T-cell (primary cell): ENCODE measurements at regions of chr6 and their contacts with region 1.

Region 1: GRCh38 chr6:10580570-10580969 is 59.4 kb downstream of the GCNT2 start:
- DNase-seq: no peak
- ATAC-seq: no peak
- H3K4me3 ChIP-seq: no peak overlapping the region
- H3K4me3 Mint-ChIP-seq: no peak overlapping the region
- H3K27ac ChIP-seq: no peak overlapping the region
- H3K27ac Mint-ChIP-seq: no peak overlapping the region
- H3K4me1 ChIP-seq: no peaks in the 10 kb centered on the region
- H3K4me1 Mint-ChIP-seq: peaks cover 0 to 13% (median 3%) of the 10 kb centered on the region in 3 donors
- H3K27me3 ChIP-seq: no peaks in the 10 kb centered on the region
- H3K27me3 Mint-ChIP-seq: no peaks in the 10 kb centered on the region

Region 2: DNA sequence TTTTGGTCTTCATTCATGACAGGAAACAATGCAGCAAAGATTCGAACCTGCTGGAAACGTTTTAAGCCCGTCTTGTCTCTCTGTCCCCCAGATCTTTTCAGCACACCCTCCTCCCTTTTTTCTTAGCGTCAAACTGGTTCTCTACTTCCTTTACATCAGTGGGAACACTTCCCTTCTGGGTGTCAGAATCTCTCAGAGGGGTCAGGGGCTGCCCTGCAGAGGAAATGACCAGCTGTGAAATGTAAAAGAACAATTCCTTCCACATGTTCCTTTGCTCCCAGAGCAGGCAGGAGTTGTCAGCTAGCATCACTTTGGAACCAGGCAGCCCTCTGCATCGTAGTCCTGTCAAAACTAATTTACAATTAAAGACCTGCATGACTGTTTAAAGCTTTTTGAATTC is 784.7 kb before region 1 on chr6:
- CTCF ChIA-PET with region 1: no interaction called
- POLR2A ChIA-PET with region 1: no interaction called
- DNase-seq: no peak
- ATAC-seq: no peak
- H3K4me3 ChIP-seq: no peak overlapping the region
- H3K4me3 Mint-ChIP-seq: no peak overlapping the region
- H3K27ac ChIP-seq: no peak overlapping the region
- H3K27ac Mint-ChIP-seq: no peak overlapping the region
- H3K4me1 ChIP-seq: no peaks in the 10 kb centered on the region
- H3K4me1 Mint-ChIP-seq: no peaks in the 10 kb centered on the region
- H3K27me3 ChIP-seq: no peaks in the 10 kb centered on the region
- H3K27me3 Mint-ChIP-seq: no peaks in the 10 kb centered on the region

Region 3: DNA sequence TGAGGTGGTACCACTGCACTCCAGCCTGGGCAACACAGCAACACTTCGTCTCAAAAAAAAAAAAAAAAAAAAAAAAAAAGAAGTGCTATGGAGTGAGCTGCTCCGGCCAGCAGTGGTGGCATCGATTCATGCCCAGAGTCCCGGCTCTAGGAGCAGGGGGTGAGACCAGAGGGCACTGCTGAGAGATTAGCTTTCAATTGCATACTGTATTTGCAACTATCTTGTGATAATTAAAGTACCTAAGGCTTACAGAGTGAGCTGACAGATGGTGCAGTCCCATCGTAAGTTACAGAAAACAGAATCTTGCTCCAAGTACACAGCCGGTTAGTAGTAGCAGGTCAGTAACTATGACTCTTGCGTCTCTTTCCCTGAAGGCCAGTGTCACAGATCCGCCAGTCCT is 198.5 kb after region 1 on chr6:
- CTCF ChIA-PET with region 1: interaction called in 1 of 2 experiments, 10 read pairs
- POLR2A ChIA-PET with region 1: interaction called in 1 of 2 experiments, 12 read pairs
- DNase-seq: no peak
- ATAC-seq: no peak
- H3K4me3 ChIP-seq: no peak overlapping the region
- H3K4me3 Mint-ChIP-seq: no peak overlapping the region
- H3K27ac ChIP-seq: no peak overlapping the region
- H3K27ac Mint-ChIP-seq: no peak overlapping the region
- H3K4me1 ChIP-seq: no peaks in the 10 kb centered on the region
- H3K4me1 Mint-ChIP-seq: peaks cover 2 to 11% (median 3%) of the 10 kb centered on the region in 3 donors
- H3K27me3 ChIP-seq: no peaks in the 10 kb centered on the region
- H3K27me3 Mint-ChIP-seq: no peaks in the 10 kb centered on the region